A549 (cell line): ENCODE measurements at regions of chr2 and their contacts with region 1.

Region 1: DNA sequence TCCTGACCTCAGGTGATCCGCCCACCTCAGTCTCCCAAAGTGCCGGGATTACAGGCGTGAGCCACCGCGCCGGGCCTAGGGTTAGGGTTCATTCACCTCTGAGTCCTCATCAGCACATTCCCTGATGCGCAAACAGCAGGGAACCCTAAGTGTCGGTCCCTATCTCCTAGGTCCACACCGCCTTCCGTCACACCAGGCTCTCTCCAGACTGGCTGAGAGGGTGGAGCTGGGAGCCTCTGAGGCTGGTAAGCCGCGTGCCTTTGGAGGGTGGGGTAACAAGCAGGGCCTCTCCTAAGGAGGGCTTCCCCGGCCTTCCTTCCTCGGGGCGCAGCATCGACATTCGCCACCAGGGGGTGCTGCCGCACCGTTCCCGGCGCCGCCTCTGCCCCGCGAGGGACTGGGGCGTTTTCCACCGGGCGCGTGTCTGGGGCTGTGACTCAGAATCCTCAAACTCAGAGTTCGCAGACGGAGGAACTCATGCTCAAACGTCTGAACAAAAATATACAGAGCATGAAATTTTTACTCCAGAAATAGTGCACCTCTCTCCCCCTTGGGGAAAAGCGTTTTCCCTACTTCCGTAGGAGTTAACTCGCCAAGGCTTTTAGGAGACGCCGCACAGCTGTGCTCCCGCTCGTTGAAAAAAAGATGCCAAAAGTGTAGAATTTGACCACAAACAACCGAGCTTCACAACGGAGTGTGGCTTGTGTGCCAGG is 63.9 kb upstream of the ASAP2 start:
- DNase-seq: peak; percentile 93
- ATAC-seq: peak; percentile 88 to 94
- H3K4me3 ChIP-seq: peak overlapping the region; percentile 42
- H3K27ac ChIP-seq: peak overlapping the region; percentile 79 to 83
- H3K4me1 ChIP-seq: peaks cover 30% of the 10 kb centered on the region
- CTCF ChIP-seq: peak; percentile 99
- EP300 ChIP-seq: no peak
- POLR2A ChIP-seq: no peak
- RAD21 ChIP-seq: peak; percentile 100

Region 2: DNA sequence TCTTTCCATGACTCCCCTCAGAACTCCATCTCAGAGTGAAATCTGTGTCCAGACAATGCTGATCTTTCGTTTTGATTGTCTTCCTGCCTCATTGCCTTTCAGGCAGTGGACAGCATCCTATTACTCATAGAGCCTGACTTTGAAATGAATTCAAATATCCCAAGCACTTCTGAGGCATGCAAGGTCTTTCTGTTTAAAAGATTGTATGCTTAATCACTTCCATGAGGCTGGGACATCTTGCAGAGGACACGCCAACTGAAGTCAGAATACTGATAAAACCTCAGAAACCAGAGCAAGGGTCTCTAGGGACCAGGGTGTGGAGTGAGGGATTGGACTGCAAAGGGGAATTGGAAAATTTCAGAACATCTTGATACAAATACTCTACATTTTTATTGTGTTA is 1297.4 kb before region 1 on chr2:
- CTCF ChIA-PET with region 1: no interaction called
- POLR2A ChIA-PET with region 1: no interaction called
- DNase-seq: no peak
- ATAC-seq: peak in 1 of 2 experiments; percentile 48; a peak in 3 of 6 replicates
- H3K4me3 ChIP-seq: no peak overlapping the region
- H3K27ac ChIP-seq: no peak overlapping the region
- H3K4me1 ChIP-seq: no peaks in the 10 kb centered on the region
- CTCF ChIP-seq: no peak
- EP300 ChIP-seq: no peak
- POLR2A ChIP-seq: no peak
- RAD21 ChIP-seq: no peak

Region 3: GRCh38 chr2:8872821-8873432 is 269.8 kb before region 1 on chr2:
- CTCF ChIA-PET with region 1: interaction called, 113 read pairs
- POLR2A ChIA-PET with region 1: no interaction called
- DNase-seq: peak; percentile 61 to 70
- ATAC-seq: peak; percentile 57 to 81; a peak in 3 of 6 replicates
- H3K4me3 ChIP-seq: no peak overlapping the region
- H3K27ac ChIP-seq: no peak overlapping the region
- H3K4me1 ChIP-seq: no peaks in the 10 kb centered on the region
- CTCF ChIP-seq: peak; percentile 93
- EP300 ChIP-seq: no peak
- POLR2A ChIP-seq: no peak
- RAD21 ChIP-seq: peak; percentile 79 to 80

Region 4: DNA sequence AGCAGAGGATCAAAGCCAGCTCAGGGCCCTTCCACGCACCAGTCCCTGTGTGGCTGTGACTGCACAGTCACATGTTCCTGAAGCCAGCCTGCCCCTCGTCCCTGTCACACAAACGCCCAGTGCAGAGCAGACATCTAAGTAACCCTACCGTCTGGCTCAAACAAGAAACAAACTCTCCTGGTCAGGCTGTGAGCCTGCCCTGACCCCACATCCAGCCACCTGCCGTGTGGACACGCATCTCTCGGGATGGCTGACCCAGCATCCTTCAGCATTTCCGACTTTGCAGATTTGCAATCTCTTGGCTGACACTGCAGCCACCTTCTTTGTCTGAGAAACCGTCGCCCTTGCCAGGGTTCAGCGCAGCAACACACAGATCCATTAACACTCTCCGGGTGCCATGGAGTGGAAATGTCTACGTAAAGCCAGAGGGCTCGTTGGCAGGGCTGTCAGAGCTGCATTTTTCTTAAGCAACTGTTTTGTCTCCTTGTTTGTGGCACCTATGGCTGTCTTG is 18.4 kb before region 1 on chr2:
- CTCF ChIA-PET with region 1: interaction called, 61 read pairs
- POLR2A ChIA-PET with region 1: no interaction called
- DNase-seq: no peak
- ATAC-seq: peak; percentile 32 to 43; a peak in 4 of 6 replicates
- H3K4me3 ChIP-seq: no peak overlapping the region
- H3K27ac ChIP-seq: no peak overlapping the region
- H3K4me1 ChIP-seq: no peaks in the 10 kb centered on the region
- CTCF ChIP-seq: no peak
- EP300 ChIP-seq: no peak
- POLR2A ChIP-seq: no peak
- RAD21 ChIP-seq: no peak

Region 5: DNA sequence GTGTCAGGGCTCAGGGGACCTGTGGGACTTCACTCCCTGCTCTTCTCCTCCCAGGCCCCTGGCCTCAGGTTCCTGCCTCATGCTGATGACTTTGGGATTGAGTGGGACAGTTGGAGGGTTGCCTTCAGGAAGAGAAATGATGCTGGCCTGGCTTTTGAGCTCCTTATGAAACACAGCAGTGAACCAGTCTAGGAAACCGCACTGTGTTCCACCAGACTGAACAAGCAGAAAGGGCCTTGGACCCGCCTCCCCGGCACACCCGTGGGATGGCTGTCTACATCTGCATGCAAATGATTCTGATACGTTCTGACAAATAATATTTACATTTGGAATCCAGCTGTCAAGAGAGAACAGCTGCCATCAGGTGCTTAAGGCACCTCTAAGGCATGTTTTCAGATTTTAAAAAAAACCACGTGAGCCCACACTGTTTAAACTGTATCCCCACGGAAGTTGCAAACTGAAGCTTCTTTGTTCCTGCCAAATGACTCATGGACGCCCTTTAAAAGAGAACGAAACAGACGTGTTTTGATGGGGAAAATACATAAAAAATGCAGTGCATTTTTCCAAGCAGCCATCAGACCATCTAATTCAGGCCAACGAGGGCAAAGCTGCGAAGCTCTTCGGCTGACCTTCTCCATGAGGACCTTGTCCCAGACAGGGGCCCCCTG is 36.3 kb after region 1 on chr2:
- CTCF ChIA-PET with region 1: interaction called, 12 read pairs
- POLR2A ChIA-PET with region 1: no interaction called
- DNase-seq: peak in 1 of 2 experiments; percentile 26
- ATAC-seq: peak; percentile 27 to 56; a peak in 4 of 6 replicates
- H3K4me3 ChIP-seq: no peak overlapping the region
- H3K27ac ChIP-seq: peak overlapping the region; percentile 37 to 50; a peak in 5 of 6 replicates
- H3K4me1 ChIP-seq: peaks cover 23% of the 10 kb centered on the region
- CTCF ChIP-seq: no peak
- EP300 ChIP-seq: no peak
- POLR2A ChIP-seq: no peak
- RAD21 ChIP-seq: no peak

Region 6: GRCh38 chr2:9333591-9334171 is 191.0 kb after region 1 on chr2:
- CTCF ChIA-PET with region 1: interaction called, 209 read pairs
- POLR2A ChIA-PET with region 1: no interaction called
- DNase-seq: peak; percentile 70 to 83
- ATAC-seq: peak; percentile 96
- H3K4me3 ChIP-seq: no peak overlapping the region
- H3K27ac ChIP-seq: peak overlapping the region; percentile 27 to 51; a peak in 3 of 6 replicates
- H3K4me1 ChIP-seq: peaks cover 15% of the 10 kb centered on the region
- CTCF ChIP-seq: peak; percentile 88
- EP300 ChIP-seq: no peak
- POLR2A ChIP-seq: no peak
- RAD21 ChIP-seq: peak; percentile 92 to 93

Region 7: DNA sequence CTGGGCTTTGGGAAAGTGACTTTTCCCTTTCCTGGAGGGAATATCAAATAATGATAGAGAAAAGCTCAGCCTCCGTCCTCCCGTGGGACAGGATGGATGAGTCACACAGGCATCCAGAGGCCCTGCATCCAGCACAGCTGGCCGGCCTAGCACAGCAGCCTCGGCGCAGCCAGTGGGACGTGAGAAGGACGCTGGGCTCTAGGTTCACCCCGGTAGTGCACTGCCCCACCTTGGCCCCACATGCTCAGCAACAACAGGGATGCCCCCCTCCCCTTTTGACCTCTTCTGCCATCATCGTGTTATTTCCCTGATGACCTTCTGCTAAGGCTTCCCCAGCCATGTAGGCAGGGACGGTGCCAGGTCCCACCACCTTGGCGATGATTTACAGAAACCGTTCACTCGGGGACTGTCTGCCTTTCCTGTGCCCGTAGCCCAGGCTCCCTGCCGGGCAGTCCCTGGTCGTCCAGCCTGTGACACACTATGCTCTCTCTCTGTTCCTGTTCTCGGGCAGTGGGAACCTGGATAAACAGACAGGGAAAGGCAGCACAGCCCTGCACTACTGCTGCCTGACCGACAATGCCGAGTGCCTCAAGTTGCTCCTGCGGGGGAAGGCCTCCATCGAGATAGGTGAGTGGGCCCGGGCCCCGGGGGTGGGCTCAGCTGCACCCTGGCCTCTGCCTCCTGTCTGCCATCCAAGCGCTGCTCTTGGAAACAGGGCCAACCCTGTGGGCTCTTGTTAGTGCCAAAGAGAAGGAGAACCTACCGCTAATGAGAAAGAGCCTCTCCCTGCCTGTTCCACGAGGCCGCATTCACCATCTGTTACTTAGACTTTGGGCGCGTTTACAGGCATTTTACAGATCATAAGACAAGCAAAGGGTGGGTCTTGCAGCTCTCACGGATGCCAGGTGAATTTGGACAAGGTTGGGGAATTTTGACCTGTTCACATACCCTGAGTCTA is 236.0 kb after region 1 on chr2:
- CTCF ChIA-PET with region 1: interaction called, 67 read pairs
- POLR2A ChIA-PET with region 1: interaction called, 12 read pairs
- DNase-seq: peak; percentile 61 to 82
- ATAC-seq: peak; percentile 67 to 73
- H3K4me3 ChIP-seq: no peak overlapping the region
- H3K27ac ChIP-seq: peak overlapping the region; percentile 92 to 96
- H3K4me1 ChIP-seq: peaks cover 55% of the 10 kb centered on the region
- CTCF ChIP-seq: no peak
- EP300 ChIP-seq: no peak
- POLR2A ChIP-seq: no peak
- RAD21 ChIP-seq: no peak; a peak in 1 of 5 replicates